ENCODE measurements at regions of chr2 and their contacts with region 1.

Region 1: GRCh38 chr2:219475697-219476651 is 22.7 kb upstream of the GMPPA start:
- DNase-seq: no peak
- H3K4me3 ChIP-seq: peak overlapping the region in 1 of 4 donors; percentile 12
- H3K27ac ChIP-seq: peak overlapping the region in 1 of 4 donors; percentile 36
- H3K4me1 ChIP-seq: peaks cover 0 to 18% (median 7%) of the 10 kb centered on the region in 3 donors
- H3K27me3 ChIP-seq: peaks cover 0 to 29% (median 0%) of the 10 kb centered on the region in 4 donors
- CTCF ChIP-seq: peak; percentile 57 to 84 (median 78)
- POLR2A ChIP-seq: no peak

Region 2: GRCh38 chr2:219398721-219399333 is 77.1 kb before region 1 on chr2:
- intact Hi-C with region 1: no loop called
- DNase-seq: no peak
- H3K4me3 ChIP-seq: no peak overlapping the region
- H3K27ac ChIP-seq: peak overlapping the region in 3 of 4 donors; percentile 0 to 50 (median 2)
- H3K4me1 ChIP-seq: peaks cover 0 to 27% (median 10%) of the 10 kb centered on the region in 3 donors
- H3K27me3 ChIP-seq: peaks cover 0 to 3% (median 0%) of the 10 kb centered on the region in 4 donors
- CTCF ChIP-seq: no peak
- POLR2A ChIP-seq: no peak

Region 3: DNA sequence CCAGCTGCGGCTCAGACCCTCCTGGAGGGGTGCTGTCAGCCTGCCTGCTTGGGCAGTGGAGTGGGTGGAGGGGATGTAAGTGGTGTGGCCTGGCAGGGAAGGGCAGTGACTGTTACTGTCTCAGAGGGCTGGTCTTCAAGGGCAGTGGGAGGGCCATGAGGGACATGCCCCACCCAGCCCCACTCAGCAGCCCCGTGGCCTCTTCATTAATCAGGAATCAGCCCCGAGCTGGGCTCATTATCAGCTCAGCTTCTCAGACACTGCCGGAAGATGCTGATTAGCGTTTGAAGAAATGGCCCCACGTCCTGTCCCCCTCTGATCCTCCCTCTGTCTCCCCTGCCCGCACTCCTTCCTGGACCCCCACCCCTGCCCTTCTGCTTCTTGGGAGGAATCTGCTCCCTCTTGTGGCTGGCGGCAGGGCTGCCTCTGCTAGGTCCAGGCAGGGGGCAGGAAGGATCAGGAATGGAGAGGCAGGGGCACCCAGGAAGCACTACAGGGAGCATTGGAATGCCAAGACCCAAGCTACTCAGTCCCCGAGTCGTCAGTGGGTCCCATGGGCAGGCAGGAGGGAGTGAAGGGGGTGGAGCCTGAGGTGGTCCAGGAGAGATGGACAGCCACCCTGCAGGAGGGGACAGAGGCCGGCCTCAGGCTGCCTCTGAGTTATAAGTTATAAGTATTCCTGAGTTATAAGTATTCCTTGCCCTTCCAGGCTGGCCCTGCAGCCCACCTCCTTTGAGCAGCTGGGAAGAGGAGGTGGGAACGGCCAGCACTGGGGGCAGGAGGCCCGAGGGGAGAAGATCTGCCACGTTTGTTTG is 45.3 kb after region 1 on chr2:
- intact Hi-C with region 1: loop called (anchors 5 kb)
- DNase-seq: no peak
- H3K4me3 ChIP-seq: no peak overlapping the region
- H3K27ac ChIP-seq: peak overlapping the region in 2 of 4 donors; percentile 45 to 58
- H3K4me1 ChIP-seq: peaks cover 17 to 30% (median 21%) of the 10 kb centered on the region in 3 donors
- H3K27me3 ChIP-seq: peaks cover 5 to 100% (median 7%) of the 10 kb centered on the region in 4 donors
- CTCF ChIP-seq: peak in 4 of 6 experiments; percentile 42 to 53 (median 44)
- POLR2A ChIP-seq: no peak

Region 4: GRCh38 chr2:219769090-219769910 is 293.3 kb after region 1 on chr2:
- intact Hi-C with region 1: no loop called
- DNase-seq: no peak
- H3K4me3 ChIP-seq: no peak overlapping the region
- H3K27ac ChIP-seq: peak overlapping the region in 1 of 4 donors; percentile 4
- H3K4me1 ChIP-seq: no peaks in the 10 kb centered on the region
- H3K27me3 ChIP-seq: no peaks in the 10 kb centered on the region
- CTCF ChIP-seq: no peak
- POLR2A ChIP-seq: no peak